ENCODE measurements at regions of chr10 and their contacts with region 1.

Region 1: DNA sequence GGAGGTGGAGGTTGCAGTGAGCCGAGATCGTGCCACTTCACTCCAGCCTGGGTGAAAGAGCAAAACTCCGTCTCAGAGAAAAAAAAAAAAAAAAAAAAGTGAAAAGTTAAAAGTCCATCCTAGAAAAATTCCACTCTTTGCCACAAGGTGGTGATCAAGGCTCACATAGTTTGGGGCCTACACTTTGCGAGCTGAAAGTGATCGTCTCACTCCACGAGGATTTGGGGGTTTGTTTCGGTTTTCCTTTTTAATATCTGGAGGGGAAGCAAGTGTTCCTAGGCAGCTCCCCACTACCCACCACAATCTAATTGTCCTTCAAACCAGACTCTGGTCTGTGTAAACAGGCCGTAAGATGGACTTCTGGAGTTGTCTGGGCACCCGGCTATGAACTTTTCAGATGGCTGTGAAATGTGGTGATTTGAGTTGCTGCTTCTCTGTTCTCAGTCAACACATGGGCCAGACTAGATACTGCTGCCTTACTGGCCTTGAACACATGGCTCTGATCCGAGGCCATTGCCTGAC is 27.1 kb downstream of the PRLHR start:
- DNase-seq: peak; percentile 9 to 82 (median 52)
- ATAC-seq: peak; percentile 80
- H3K4me3 ChIP-seq: no peak overlapping the region
- H3K4me3 Mint-ChIP-seq: no peak overlapping the region
- H3K27ac ChIP-seq: no peak overlapping the region
- H3K27ac Mint-ChIP-seq: no peak overlapping the region
- H3K4me1 ChIP-seq: peaks cover 5% of the 10 kb centered on the region
- H3K4me1 Mint-ChIP-seq: peaks cover 6% of the 10 kb centered on the region
- H3K27me3 ChIP-seq: no peaks in the 10 kb centered on the region
- H3K27me3 Mint-ChIP-seq: no peaks in the 10 kb centered on the region
- CTCF ChIP-seq: peak; percentile 72

Region 2: GRCh38 chr10:118163217-118163616 is 405.2 kb before region 1 on chr10:
- CTCF ChIA-PET with region 1: no interaction called
- POLR2A ChIA-PET with region 1: no interaction called
- intact Hi-C with region 1: no loop called
- DNase-seq: no peak
- ATAC-seq: no peak
- H3K4me3 ChIP-seq: no peak overlapping the region
- H3K4me3 Mint-ChIP-seq: no peak overlapping the region
- H3K27ac ChIP-seq: no peak overlapping the region
- H3K27ac Mint-ChIP-seq: no peak overlapping the region
- H3K4me1 ChIP-seq: no peaks in the 10 kb centered on the region
- H3K4me1 Mint-ChIP-seq: no peaks in the 10 kb centered on the region
- H3K27me3 ChIP-seq: no peaks in the 10 kb centered on the region
- H3K27me3 Mint-ChIP-seq: peaks cover 6% of the 10 kb centered on the region
- CTCF ChIP-seq: no peak

Region 3: DNA sequence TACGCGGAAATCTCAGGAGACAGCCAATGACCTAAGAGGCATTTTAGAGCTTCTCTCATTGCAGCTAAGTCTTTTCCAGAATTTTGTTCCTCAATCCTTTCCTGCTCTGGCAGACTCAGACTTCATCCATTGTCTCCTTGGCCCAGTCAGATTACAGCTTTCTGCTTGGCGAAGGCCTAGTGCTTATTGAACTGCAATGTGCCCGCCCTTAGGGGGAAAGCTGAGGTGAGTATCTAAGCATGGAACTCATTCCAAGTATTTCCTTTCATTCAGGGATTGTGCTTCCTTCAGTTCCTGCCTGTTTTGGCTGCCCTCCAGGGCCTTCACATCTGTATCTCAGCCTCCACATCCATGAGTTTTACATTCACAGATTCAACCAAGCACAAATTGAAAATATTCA is 10.4 kb before region 1 on chr10:
- CTCF ChIA-PET with region 1: interaction called, 19 read pairs
- POLR2A ChIA-PET with region 1: no interaction called
- intact Hi-C with region 1: no loop called
- DNase-seq: no peak
- ATAC-seq: no peak
- H3K4me3 ChIP-seq: no peak overlapping the region
- H3K4me3 Mint-ChIP-seq: no peak overlapping the region
- H3K27ac ChIP-seq: no peak overlapping the region
- H3K27ac Mint-ChIP-seq: no peak overlapping the region
- H3K4me1 ChIP-seq: no peaks in the 10 kb centered on the region
- H3K4me1 Mint-ChIP-seq: no peaks in the 10 kb centered on the region
- H3K27me3 ChIP-seq: no peaks in the 10 kb centered on the region
- H3K27me3 Mint-ChIP-seq: peaks cover 20% of the 10 kb centered on the region
- CTCF ChIP-seq: no peak

Region 4: DNA sequence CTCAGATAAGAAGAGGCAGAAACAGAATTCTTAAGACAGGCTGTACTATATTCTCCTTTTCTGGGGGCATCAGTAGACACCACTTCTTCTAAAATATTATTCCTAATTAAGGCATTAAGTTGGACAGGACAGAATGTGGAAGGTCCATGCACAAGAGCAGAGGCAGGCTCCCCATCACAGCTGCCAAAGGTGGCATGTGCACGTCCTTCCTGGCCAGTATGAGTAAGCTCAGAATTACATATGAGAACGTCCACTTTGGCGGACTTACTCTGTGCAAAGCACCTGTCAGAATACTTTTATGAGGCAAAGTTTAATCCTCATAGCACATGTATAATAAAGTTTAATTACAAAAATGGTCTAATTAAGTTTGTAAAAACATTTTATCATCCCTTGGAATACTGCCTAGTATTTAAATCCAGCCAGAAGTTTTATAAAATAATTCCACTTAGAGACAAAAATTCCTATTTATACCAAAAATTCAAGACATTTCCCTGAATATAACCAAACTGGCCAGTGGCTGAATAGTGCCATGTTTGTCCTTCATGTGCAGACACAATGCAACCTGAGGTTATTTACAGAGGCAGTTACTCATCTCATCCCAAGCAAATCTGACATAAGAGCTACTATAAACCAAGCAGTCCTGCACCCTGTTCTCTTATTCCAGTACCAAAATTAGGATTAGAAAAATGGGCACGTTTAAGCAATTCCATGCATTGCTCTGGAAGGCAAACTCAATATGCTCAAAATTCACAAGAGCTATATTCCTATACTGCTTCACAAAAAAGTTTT is 120.9 kb after region 1 on chr10:
- CTCF ChIA-PET with region 1: interaction called, 12 read pairs
- POLR2A ChIA-PET with region 1: no interaction called
- intact Hi-C with region 1: no loop called
- DNase-seq: no peak
- ATAC-seq: no peak
- H3K4me3 ChIP-seq: no peak overlapping the region
- H3K4me3 Mint-ChIP-seq: no peak overlapping the region
- H3K27ac ChIP-seq: no peak overlapping the region
- H3K27ac Mint-ChIP-seq: no peak overlapping the region
- H3K4me1 ChIP-seq: no peaks in the 10 kb centered on the region
- H3K4me1 Mint-ChIP-seq: peaks cover 12% of the 10 kb centered on the region
- H3K27me3 ChIP-seq: no peaks in the 10 kb centered on the region
- H3K27me3 Mint-ChIP-seq: no peaks in the 10 kb centered on the region
- CTCF ChIP-seq: no peak

Region 5: GRCh38 chr10:118720685-118721538 is 152.5 kb after region 1 on chr10:
- CTCF ChIA-PET with region 1: interaction called, 146 read pairs
- POLR2A ChIA-PET with region 1: no interaction called
- intact Hi-C with region 1: loop called (anchors 1 kb)
- DNase-seq: peak in 8 of 9 experiments; percentile 32 to 75 (median 70)
- ATAC-seq: peak; percentile 59
- H3K4me3 ChIP-seq: no peak overlapping the region
- H3K4me3 Mint-ChIP-seq: no peak overlapping the region
- H3K27ac ChIP-seq: no peak overlapping the region
- H3K27ac Mint-ChIP-seq: no peak overlapping the region
- H3K4me1 ChIP-seq: no peaks in the 10 kb centered on the region
- H3K4me1 Mint-ChIP-seq: peaks cover 9% of the 10 kb centered on the region
- H3K27me3 ChIP-seq: no peaks in the 10 kb centered on the region
- H3K27me3 Mint-ChIP-seq: no peaks in the 10 kb centered on the region
- CTCF ChIP-seq: peak; percentile 95

Region 6: GRCh38 chr10:118800920-118801319 is 232.5 kb after region 1 on chr10:
- CTCF ChIA-PET with region 1: interaction called, 8 read pairs
- POLR2A ChIA-PET with region 1: no interaction called
- intact Hi-C with region 1: loop called in 1 of 2 experiments (anchors 1 kb)
- DNase-seq: peak in 3 of 9 experiments; percentile 12 to 50 (median 21)
- ATAC-seq: no peak
- H3K4me3 ChIP-seq: no peak overlapping the region
- H3K4me3 Mint-ChIP-seq: no peak overlapping the region
- H3K27ac ChIP-seq: no peak overlapping the region
- H3K27ac Mint-ChIP-seq: no peak overlapping the region
- H3K4me1 ChIP-seq: no peaks in the 10 kb centered on the region
- H3K4me1 Mint-ChIP-seq: no peaks in the 10 kb centered on the region
- H3K27me3 ChIP-seq: no peaks in the 10 kb centered on the region
- H3K27me3 Mint-ChIP-seq: peaks cover 11% of the 10 kb centered on the region
- CTCF ChIP-seq: no peak

Region 7: DNA sequence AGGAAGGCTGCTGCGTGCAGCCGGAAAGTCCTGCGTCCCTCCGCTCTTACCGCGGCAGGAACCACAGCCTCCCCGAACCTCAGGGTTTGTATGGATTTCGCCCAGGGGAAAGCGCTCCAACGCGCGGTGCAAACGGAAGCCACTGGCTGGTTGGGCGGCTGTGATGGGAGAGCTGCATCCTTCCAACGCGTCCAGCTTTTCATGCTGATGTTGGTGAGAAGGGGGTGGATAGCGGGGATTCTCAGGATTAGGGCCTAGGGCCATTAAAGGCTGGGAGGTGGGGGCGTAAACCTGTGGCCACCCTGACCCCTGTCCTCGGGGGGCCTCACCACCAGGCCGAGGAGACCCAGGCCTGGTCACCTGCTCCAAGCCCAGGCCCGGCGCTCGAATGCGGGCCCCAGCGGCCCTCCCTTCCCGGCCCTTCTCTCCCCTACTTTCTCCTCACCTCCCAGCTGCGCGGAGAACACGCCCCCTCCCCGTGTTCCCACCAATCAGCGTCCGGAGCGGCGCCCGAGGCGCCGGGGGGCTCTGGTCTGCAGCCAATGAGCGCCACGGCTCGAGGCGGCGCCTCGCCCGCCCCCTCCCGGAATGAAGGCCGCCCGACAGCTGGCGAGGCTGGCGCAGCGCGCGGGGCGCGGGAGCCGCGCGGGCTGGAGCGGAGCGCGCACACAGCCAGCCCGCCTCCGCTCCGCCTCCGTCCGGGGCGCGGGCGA is 460.7 kb after region 1 on chr10:
- CTCF ChIA-PET with region 1: no interaction called
- POLR2A ChIA-PET with region 1: no interaction called
- intact Hi-C with region 1: loop called in 1 of 2 experiments (anchors 10 kb)
- DNase-seq: peak; percentile 59 to 90 (median 79)
- ATAC-seq: peak; percentile 84
- H3K4me3 ChIP-seq: peak overlapping the region; percentile 37 to 53
- H3K4me3 Mint-ChIP-seq: peak overlapping the region; percentile 77
- H3K27ac ChIP-seq: no peak overlapping the region
- H3K27ac Mint-ChIP-seq: no peak overlapping the region
- H3K4me1 ChIP-seq: peaks cover 10% of the 10 kb centered on the region
- H3K4me1 Mint-ChIP-seq: peaks cover 11% of the 10 kb centered on the region
- H3K27me3 ChIP-seq: no peaks in the 10 kb centered on the region
- H3K27me3 Mint-ChIP-seq: no peaks in the 10 kb centered on the region
- CTCF ChIP-seq: no peak

Measured in CD8-positive, alpha-beta T cell (primary cell).